ENCODE measurements at regions of chr10 and their contacts with region 1.

Region 1: DNA sequence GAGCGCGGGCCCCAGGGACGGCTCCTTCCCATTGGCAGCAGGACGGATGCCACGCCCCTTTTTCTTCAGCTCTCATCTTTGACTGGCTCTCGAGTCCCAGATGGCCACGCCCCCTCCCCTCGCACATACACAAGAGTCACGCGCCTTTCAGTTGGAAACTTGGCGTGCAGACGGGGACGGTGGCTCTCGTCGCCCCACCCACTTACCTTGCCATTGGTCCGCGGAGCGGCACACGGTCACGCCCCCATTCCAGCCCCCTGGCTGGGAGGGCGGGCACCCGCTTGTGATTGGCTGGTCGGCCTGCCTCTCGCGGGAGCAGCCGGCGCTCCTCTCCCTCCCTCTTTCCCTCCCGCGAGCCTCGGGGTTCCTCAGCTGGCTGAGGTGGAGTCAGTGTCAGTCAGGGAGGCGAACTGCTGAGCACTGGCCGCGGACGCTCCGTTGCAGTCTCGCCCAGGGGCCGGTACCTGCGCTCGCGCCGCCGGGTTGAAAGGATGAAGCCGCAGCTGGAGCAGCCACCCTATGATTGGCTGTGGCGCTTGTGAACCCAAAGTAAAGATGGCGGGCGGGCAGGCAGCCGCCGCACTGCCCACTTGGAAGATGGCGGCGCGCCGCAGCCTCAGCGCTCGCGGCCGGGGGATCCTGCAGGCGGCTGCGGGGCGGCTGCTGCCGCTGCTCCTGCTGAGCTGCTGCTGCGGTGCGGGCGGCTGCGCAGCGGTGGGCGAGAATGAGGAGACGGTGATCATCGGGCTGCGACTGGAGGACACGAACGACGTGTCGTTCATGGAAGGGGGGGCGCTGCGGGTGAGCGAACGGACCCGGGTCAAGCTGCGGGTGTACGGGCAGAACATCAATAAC is at the start of gene CNNM2:
- DNase-seq: peak; percentile 100
- ATAC-seq: peak; percentile 93
- H3K4me3 Mint-ChIP-seq: peak within 1 kb of the TSS; percentile 86
- H3K27ac Mint-ChIP-seq: peak within 1 kb of the TSS; percentile 93
- H3K4me1 Mint-ChIP-seq: peaks cover 49% of the 10 kb centered on the region
- H3K27me3 Mint-ChIP-seq: peaks cover 12% of the 10 kb centered on the region
- CTCF ChIP-seq: no peak
- total RNA-seq, gene CNNM2: 5.1 to 5.2 TPM

Region 2: GRCh38 chr10:101080933-101081931 is 1837.0 kb before region 1 on chr10:
- CTCF ChIA-PET with region 1: no interaction called
- POLR2A ChIA-PET with region 1: no interaction called
- intact Hi-C with region 1: no loop called
- DNase-seq: peak; percentile 22
- ATAC-seq: no peak
- H3K4me3 Mint-ChIP-seq: no peak overlapping the region
- H3K27ac Mint-ChIP-seq: no peak overlapping the region
- H3K4me1 Mint-ChIP-seq: no peaks in the 10 kb centered on the region
- H3K27me3 Mint-ChIP-seq: peaks cover 38% of the 10 kb centered on the region
- CTCF ChIP-seq: no peak

Region 3: DNA sequence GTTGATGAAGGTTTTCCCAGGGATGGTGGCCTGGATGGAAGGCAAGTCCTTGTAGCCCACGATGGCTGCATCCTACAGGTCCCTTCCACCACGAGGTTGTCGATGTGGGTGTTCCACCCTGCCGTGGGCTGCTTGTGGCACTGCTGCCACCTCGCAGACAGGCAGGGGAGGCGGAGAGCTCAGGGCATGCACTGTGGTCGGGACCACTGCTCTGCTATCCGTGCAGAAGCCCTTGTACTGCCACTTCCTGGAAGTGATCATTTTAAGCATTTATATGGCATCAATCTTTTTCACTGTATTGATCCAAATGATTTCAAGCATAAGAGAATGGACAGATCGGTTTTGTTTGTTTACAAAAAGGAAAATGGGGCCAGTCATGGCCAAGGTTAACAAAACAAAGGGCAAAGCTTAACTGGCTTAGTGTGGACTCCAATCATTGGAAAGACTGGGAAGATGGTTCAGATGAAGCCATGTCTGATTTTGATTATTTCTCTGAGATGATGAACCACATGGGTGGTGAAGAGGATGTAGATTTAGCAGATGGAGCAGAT is 72.8 kb before region 1 on chr10:
- CTCF ChIA-PET with region 1: no interaction called
- POLR2A ChIA-PET with region 1: no interaction called
- intact Hi-C with region 1: no loop called
- DNase-seq: no peak
- ATAC-seq: no peak
- H3K4me3 Mint-ChIP-seq: no peak overlapping the region
- H3K27ac Mint-ChIP-seq: no peak overlapping the region
- H3K4me1 Mint-ChIP-seq: no peaks in the 10 kb centered on the region
- H3K27me3 Mint-ChIP-seq: no peaks in the 10 kb centered on the region
- CTCF ChIP-seq: no peak

Region 4: DNA sequence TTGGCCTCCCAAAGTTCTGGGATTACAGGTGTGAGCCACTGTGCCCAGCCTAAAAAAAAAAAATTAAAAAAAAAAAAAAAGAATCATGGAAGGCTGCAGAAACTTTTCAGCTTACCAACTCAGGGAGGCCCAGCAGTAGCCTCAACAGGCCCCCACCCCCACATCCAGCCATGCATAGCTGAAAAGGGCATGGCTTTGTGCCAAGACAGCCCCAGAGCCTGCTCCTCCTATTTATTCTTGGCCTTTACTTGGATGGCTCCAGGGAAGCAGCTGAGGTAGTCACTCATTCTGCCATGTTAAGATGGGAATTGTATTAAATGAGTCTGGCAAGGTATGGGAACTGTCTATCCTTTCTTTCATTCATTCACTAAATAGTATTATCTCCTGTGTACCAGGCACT is 13.8 kb before region 1 on chr10:
- CTCF ChIA-PET with region 1: interaction called, 12 read pairs
- POLR2A ChIA-PET with region 1: no interaction called
- intact Hi-C with region 1: no loop called
- DNase-seq: no peak
- ATAC-seq: no peak
- H3K4me3 Mint-ChIP-seq: no peak overlapping the region
- H3K27ac Mint-ChIP-seq: no peak overlapping the region
- H3K4me1 Mint-ChIP-seq: no peaks in the 10 kb centered on the region
- H3K27me3 Mint-ChIP-seq: no peaks in the 10 kb centered on the region
- CTCF ChIP-seq: no peak

Region 5: DNA sequence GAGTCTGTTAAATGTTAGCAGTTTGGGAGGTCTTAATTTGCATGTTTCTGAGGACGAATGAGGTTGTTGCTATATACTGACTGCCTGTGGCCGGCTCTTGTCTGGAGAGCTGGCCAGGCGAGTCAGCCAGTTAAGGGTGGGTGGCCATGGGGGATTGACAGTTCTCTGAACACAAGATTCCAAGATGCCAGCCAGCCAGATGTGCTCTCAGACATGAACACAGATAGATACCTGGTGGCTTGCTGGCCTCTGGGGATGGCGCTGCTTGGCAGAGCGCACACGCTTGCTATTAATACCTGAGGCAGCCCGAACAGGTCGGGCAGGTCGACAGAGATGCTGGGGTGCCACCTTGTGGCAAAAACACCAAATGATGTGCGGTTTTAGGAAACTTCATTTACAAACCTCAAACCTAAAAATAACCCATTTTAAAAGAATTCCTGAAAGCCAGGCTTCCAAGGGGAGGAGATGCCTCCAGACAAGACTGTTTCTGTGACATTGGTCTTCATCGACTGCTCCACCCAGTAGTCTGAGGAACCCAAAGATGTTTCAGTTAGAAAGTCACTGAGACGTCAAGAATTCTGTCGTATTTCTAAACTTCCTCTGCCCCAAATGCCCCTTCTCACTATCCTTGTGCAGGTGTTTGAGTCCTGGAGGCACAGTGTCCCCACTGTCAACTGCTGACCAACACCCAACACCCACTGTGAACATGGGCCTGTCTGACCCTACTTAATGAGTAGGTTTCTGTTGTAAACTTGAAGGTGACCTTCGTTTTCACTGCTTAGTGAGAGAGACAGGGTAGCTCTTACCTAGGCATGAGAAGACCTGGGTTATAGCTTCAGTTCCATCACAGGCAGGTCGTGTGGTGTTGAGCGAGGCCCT is 151.5 kb after region 1 on chr10:
- CTCF ChIA-PET with region 1: interaction called, 144 read pairs
- POLR2A ChIA-PET with region 1: interaction called, 11 read pairs
- intact Hi-C with region 1: loop called (anchors 1 kb)
- DNase-seq: peak; percentile 84
- ATAC-seq: peak; percentile 76
- H3K4me3 Mint-ChIP-seq: no peak overlapping the region
- H3K27ac Mint-ChIP-seq: peak overlapping the region; percentile 29
- H3K4me1 Mint-ChIP-seq: peaks cover 23% of the 10 kb centered on the region
- H3K27me3 Mint-ChIP-seq: no peaks in the 10 kb centered on the region
- CTCF ChIP-seq: peak; percentile 74

Region 6: DNA sequence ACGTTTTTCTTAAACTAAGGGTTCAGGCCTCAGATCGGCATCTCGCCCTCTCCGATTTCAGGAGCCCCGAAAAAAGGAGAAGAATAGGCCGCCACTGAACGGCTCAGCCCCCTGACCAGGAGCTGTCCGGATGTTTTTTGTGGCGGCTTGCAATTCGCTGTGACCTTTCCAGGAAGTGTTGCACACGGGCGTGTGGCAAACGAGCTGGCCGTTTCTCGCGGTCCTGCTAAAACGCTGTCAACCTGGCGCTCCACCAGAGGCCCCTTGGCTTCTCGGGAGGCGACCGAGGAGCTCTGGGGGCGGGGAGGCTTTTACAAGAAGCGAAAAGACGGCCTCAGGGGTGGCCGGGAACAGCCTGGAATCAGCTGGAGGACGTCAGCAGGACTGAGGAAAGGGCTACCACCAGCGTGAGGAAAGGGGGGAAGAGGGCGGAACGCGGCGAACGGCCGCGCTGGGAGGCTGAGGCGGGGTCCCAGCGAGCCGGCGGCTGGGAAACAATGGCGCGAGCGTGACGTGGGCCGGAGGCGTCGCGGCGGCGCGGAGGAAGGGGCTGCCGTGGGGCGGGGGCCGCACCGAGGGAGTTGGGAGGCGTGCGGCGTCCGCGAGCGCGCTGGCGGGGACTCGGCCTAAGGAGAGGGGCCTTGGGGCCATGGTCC is 274.4 kb after region 1 on chr10:
- CTCF ChIA-PET with region 1: interaction called, 11 read pairs
- POLR2A ChIA-PET with region 1: interaction called, 3 read pairs
- intact Hi-C with region 1: no loop called
- DNase-seq: peak; percentile 84
- ATAC-seq: peak; percentile 52
- H3K4me3 Mint-ChIP-seq: peak overlapping the region; percentile 97
- H3K27ac Mint-ChIP-seq: peak overlapping the region; percentile 99
- H3K4me1 Mint-ChIP-seq: peaks cover 36% of the 10 kb centered on the region
- H3K27me3 Mint-ChIP-seq: peaks cover 1% of the 10 kb centered on the region
- CTCF ChIP-seq: no peak

Region 7: DNA sequence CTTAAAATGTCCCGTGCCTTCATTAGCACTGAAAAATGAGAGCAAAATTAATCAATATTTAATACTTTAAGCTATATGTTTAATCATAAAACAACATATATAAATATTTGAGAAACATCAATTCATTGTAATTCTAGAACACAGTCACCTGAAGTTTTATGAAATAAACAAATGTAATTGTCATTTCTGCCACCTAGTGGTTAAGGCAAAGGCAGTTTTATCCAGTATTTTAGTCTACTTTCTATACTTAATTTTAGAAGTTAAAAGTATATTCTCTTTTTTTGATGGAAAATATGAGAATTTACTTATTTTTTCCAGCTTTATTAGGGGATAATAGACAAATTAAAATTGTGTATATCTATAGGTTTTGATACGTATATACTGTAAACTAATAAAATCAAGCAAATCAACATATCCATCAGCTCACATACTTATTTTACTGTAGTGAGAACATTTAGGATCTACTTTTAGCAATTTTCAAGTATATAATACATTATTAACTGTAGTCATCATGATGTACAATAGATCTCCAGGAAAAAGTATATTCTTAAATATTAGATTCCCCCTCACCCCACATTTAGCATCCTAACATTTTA is 415.8 kb after region 1 on chr10:
- CTCF ChIA-PET with region 1: interaction called, 10 read pairs
- POLR2A ChIA-PET with region 1: no interaction called
- intact Hi-C with region 1: no loop called
- DNase-seq: no peak
- ATAC-seq: no peak
- H3K4me3 Mint-ChIP-seq: no peak overlapping the region
- H3K27ac Mint-ChIP-seq: no peak overlapping the region
- H3K4me1 Mint-ChIP-seq: no peaks in the 10 kb centered on the region
- H3K27me3 Mint-ChIP-seq: no peaks in the 10 kb centered on the region
- CTCF ChIP-seq: peak; percentile 72